Cardiac septum (tissue), 1 donor: ENCODE measurements at regions of chr2 and their contacts with region 1.

Region 1: GRCh38 chr2:47272031-47272864 is 117.1 kb upstream of the STPG4 start:
- DNase-seq: peak; percentile 90

Region 2: DNA sequence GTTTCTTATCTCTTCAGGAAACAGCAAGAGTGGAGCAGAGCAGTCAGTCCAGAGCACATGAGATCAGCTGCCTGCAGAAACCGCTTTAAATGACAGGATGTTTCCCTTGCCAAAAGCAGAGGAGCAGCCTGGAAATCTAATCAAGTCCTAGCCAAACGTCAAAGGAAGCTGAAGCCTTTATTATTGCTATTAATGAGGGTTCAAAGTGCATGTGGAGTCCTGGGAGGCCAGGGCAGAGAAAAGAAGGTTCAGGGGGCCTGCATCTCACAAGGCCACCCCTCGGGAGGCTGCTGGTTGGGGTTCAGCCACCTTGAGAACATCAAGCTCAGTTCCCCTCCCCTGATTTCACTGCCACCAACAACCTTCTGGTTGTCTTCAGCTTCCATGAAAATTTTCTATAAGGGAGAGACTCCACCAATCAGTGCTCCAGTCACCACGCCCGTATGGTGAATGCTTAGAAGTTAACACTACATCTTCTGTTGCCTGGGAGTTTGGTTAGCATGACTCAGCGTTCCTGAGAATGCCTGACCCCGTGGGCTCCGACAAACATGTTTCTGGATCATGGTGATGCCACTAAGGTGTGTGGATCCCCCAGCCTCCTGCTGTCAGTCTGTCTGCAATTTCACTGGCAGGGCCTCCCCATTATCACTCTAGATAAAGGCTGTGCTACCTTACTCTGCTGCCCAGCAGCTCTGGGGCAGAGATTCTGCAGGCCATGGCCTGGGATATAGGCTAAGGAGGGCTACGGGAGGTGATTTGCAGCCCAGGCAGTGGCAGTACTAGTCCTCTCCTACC is 183.4 kb before region 1 on chr2:
- intact Hi-C with region 1: loop called (anchors 5 kb)
- DNase-seq: no peak

Region 3: GRCh38 chr2:47309952-47310800 is 37.9 kb after region 1 on chr2:
- intact Hi-C with region 1: loop called (anchors 5 kb)
- DNase-seq: peak; percentile 73